Ovary (tissue), 10 donors: ENCODE measurements at regions of chr5 and their contacts with region 1.

Region 1: DNA sequence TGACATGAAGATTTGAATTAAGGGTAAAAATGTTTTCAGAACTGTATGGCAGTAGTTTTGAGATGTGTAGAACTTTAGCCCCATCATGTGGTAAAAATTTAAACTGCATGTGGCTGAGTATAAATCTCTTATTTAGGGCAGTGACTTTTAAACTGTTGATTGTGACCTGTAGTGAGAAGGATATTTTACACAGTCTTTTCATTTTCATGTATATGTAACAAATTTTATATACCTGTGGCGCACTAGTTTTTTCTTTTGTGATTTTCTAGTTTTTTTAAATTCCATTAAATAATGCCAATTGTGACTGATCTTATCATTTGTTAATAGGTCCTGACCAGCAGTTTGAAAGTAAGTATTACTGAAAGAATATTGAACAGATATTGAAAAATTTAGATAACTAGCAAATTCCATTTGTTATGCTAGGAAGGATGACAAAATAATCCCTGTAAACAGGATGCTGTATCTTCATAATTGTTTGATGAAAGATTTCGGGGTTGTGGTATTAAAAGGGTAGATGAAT is 47.2 kb downstream of the GPBP1 start:
- DNase-seq: no peak
- H3K4me3 ChIP-seq: no peak overlapping the region
- H3K27ac ChIP-seq: no peak overlapping the region
- H3K4me1 ChIP-seq: no peaks in the 10 kb centered on the region
- H3K27me3 ChIP-seq: no peaks in the 10 kb centered on the region
- CTCF ChIP-seq: peak; percentile 74 to 86 (median 84)
- EP300 ChIP-seq: no peak
- POLR2A ChIP-seq: no peak

Region 2: DNA sequence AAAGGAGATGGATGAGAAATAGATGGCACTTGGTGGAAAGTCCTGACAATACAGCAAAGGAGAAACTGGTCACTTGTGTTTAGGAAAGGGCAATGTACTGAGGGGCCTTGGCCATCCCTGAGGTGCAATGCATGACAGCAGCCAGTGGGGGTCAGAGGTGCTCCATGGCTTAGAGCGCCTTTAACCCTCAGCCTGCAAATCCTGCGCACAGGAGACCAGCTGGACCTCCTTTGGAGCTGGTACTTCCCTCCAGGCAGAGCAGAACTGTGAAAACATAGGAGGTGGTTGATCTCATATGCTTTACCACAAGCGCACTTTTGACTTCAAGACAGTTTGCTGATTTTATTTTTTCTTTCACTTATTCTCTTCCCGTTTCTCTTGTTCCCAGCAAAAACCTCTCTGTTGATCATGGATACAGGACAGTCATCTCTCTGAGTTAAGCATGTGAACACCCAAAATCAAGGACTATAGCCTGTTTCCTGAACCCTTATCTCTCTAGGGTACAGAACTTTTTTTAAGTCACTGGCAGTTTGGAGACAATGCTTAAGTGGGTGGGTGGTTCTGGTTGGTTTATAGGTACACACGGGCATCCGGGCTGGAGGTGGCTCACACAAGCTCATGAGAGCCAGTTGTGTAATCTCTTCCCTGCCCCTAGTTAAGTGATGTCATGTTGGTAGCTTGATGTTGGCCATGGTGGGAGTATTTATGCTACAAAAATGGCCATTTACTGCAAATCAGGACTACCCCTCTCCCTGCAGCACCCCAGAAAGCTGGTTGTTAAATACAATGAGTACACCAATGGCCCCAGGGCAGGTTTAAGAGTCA is 950.3 kb before region 1 on chr5:
- intact Hi-C with region 1: loop called in 3 of 4 experiments (anchors 10 kb)
- DNase-seq: peak; percentile 80 to 89 (median 84)
- H3K4me3 ChIP-seq: no peak overlapping the region
- H3K27ac ChIP-seq: no peak overlapping the region
- H3K4me1 ChIP-seq: peaks cover 2% of the 10 kb centered on the region
- H3K27me3 ChIP-seq: no peaks in the 10 kb centered on the region
- CTCF ChIP-seq: peak; percentile 86 to 92 (median 91)
- EP300 ChIP-seq: no peak
- POLR2A ChIP-seq: no peak

Region 3: GRCh38 chr5:56900858-56901578 is 320.1 kb before region 1 on chr5:
- intact Hi-C with region 1: loop called in 3 of 4 experiments (anchors 5 to 10 kb)
- DNase-seq: no peak
- H3K4me3 ChIP-seq: no peak overlapping the region
- H3K27ac ChIP-seq: no peak overlapping the region
- H3K4me1 ChIP-seq: no peaks in the 10 kb centered on the region
- H3K27me3 ChIP-seq: no peaks in the 10 kb centered on the region
- CTCF ChIP-seq: peak in 2 of 3 donors; percentile 32 to 59
- EP300 ChIP-seq: no peak
- POLR2A ChIP-seq: no peak

Region 4: DNA sequence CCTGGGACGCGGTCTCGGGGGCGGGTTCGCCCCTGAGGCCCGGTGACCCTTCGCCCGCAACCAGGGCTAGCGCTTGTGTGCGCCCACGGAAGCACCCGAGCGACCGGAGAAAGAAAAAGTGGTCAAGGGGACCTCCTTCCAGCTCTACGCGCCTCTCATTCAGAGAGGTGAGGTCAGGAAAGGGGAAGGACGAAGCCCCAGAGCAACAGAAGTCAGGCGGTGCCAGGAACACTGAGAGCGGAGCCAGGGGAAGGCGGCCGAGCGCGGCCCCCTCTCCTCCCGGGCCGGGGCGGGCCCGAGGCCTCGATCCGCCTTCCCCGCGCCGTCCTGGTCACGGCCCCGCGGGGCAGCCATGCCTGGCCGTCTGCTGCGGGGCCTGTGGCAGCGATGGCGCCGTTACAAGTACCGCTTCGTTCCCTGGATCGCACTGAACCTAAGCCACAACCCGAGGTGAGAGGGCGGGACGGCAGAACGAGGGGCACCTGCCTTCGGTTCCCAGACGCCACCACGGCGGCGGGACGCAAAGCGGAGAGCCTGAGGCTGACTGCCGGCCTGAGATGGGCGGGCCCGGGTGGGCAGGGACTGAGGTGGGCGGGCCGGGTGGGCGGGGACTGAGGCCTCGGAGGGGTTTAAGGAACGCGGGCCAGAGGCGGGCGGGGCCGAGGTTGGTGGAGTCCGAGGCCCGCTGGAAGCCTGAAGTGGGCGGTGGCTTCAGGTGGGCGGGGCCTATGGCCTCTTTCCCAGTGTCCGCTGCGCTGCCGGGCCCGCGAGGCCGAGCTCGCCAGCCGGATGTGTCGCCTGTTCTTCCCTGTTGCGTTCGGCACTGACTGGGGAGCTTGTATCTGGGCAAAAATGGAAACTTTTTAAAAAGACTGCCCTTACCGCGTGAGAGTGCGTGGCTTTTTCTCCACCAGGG is 311.6 kb before region 1 on chr5 and contains the start of gene SETD9:
- intact Hi-C with region 1: loop called in 3 of 4 experiments (anchors 5 to 10 kb)
- DNase-seq: peak; percentile 98 to 100 (median 99)
- H3K4me3 ChIP-seq: peak within 1 kb of the TSS; percentile 68
- H3K27ac ChIP-seq: peak within 1 kb of the TSS; percentile 43 to 85
- H3K4me1 ChIP-seq: peaks cover 3% of the 10 kb centered on the region
- H3K27me3 ChIP-seq: no peaks in the 10 kb centered on the region
- CTCF ChIP-seq: no peak
- EP300 ChIP-seq: no peak
- POLR2A ChIP-seq: peak; percentile 68
- total RNA-seq, gene SETD9: 2.3 to 9.0 (median 7.0) TPM

Region 5: GRCh38 chr5:56951946-56952691 is 269.0 kb before region 1 on chr5 and contains the start of gene MIER3:
- intact Hi-C with region 1: loop called in 1 of 4 experiments (anchors 10 kb)
- DNase-seq: peak; percentile 73 to 86 (median 77)
- H3K4me3 ChIP-seq: peak within 1 kb of the TSS; percentile 90
- H3K27ac ChIP-seq: peak within 1 kb of the TSS; percentile 94 to 100
- H3K4me1 ChIP-seq: peaks cover 5% of the 10 kb centered on the region
- H3K27me3 ChIP-seq: no peaks in the 10 kb centered on the region
- CTCF ChIP-seq: no peak
- EP300 ChIP-seq: no peak
- POLR2A ChIP-seq: no peak
- total RNA-seq, gene MIER3: 28.1 to 57.2 (median 41.0) TPM

Region 6: DNA sequence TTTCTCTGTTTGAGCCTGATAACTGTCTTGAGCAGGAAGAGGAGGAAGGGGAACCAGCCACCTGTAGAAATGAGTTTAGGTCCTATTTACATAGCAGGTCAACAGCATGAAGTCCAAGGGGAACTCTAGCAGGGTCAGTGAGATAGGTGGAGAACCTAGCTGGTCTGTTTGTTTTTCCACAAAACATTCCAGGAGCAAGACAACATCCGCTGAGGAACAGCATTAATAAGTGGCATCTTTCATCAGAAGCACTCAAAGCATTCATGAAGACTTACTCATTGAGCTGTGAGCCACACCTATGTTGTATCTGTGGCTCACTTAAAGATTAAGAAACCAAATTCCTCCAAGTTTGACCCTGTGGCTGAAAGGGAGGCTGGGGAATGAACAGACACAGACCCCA is 145.6 kb after region 1 on chr5:
- intact Hi-C with region 1: no loop called
- DNase-seq: no peak
- H3K4me3 ChIP-seq: no peak overlapping the region
- H3K27ac ChIP-seq: no peak overlapping the region
- H3K4me1 ChIP-seq: no peaks in the 10 kb centered on the region
- H3K27me3 ChIP-seq: no peaks in the 10 kb centered on the region
- CTCF ChIP-seq: no peak
- EP300 ChIP-seq: no peak
- POLR2A ChIP-seq: no peak